Sigmoid colon (tissue), 7 donors: ENCODE measurements at regions of chr1 and their contacts with region 1.

Region 1: GRCh38 chr1:115364046-115364775 is 26.2 kb upstream of the NGF start:
- DNase-seq: no peak
- H3K4me3 ChIP-seq: no peak overlapping the region
- H3K27ac ChIP-seq: peak overlapping the region; percentile 55 to 72 (median 66)
- H3K4me1 ChIP-seq: peaks cover 0 to 39% (median 38%) of the 10 kb centered on the region in 4 donors
- H3K27me3 ChIP-seq: no peaks in the 10 kb centered on the region
- CTCF ChIP-seq: no peak
- EP300 ChIP-seq: no peak
- POLR2A ChIP-seq: no peak

Region 2: DNA sequence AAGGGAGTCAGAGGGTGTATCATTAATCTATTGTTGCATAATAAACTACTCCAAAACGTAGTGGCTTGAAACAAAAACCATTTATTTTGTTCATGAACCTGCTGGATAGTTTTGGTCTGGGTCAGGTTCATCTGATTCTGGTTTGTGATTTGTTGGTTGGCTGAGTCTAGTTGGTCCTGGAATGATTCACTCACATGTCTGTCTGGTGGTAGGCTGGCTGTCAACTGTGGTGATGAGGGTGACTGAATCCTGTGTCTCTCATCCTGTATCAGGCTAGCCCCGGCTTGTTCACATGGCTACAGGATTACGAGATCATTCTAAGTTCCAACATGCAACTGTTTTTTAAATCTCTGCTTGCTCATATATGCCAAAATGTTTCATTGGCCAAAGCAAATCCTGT is 561.2 kb before region 1 on chr1:
- intact Hi-C with region 1: no loop called
- DNase-seq: no peak
- H3K4me3 ChIP-seq: no peak overlapping the region
- H3K27ac ChIP-seq: no peak overlapping the region
- H3K4me1 ChIP-seq: no peaks in the 10 kb centered on the region
- H3K27me3 ChIP-seq: no peaks in the 10 kb centered on the region
- CTCF ChIP-seq: no peak
- EP300 ChIP-seq: no peak
- POLR2A ChIP-seq: no peak

Region 3: GRCh38 chr1:115456441-115456961 is 92.3 kb after region 1 on chr1:
- intact Hi-C with region 1: loop called (anchors 10 kb)
- DNase-seq: no peak
- H3K4me3 ChIP-seq: no peak overlapping the region
- H3K27ac ChIP-seq: no peak overlapping the region
- H3K4me1 ChIP-seq: peaks cover 0 to 29% (median 23%) of the 10 kb centered on the region in 4 donors
- H3K27me3 ChIP-seq: no peaks in the 10 kb centered on the region
- CTCF ChIP-seq: no peak
- EP300 ChIP-seq: no peak
- POLR2A ChIP-seq: no peak